ENCODE measurements at regions of chr9 and their contacts with region 1.

Region 1: GRCh38 chr9:73081979-73082657 is 69.5 kb upstream of the ANXA1 start:
- DNase-seq: no peak
- H3K4me3 ChIP-seq: no peak overlapping the region
- H3K27ac ChIP-seq: no peak overlapping the region
- H3K4me1 ChIP-seq: peaks cover 0 to 44% (median 37%) of the 10 kb centered on the region in 4 donors
- H3K27me3 ChIP-seq: no peaks in the 10 kb centered on the region
- CTCF ChIP-seq: peak; percentile 84 to 87 (median 85)
- EP300 ChIP-seq: no peak
- POLR2A ChIP-seq: no peak

Region 2: DNA sequence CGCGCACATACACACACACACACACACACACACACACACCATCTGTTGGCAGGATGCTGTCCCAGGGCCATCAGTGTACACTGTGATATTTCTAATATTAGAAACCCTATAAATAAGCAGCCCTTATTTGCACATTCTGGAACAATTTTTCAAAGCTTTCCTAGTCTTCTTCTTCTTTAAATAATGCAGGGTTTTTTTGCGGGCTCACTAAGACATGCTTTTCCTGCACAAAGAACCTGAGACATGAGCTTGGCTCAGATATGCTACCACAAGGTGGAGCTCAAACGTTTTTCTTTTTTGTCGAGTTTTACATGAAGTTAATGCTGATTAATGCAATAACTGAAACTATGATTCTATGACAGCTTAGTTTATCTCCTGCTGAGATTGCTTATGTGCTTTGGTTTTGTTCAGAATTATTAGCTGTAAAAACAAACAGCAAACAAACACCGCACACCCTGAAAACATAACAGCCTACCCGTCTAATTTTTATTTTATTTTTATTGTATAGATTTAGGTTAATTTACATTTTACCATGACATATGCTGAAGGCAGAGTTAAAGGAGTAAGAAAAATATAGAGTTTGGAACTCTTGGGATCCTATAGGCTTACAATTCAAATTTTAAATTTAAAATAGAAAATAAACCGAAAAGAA is 225.0 kb before region 1 on chr9:
- intact Hi-C with region 1: loop called (anchors 2 kb)
- DNase-seq: no peak
- H3K4me3 ChIP-seq: no peak overlapping the region
- H3K27ac ChIP-seq: peak overlapping the region in 1 of 4 donors; percentile 18
- H3K4me1 ChIP-seq: peaks cover 16 to 22% (median 19%) of the 10 kb centered on the region in 4 donors
- H3K27me3 ChIP-seq: no peaks in the 10 kb centered on the region
- CTCF ChIP-seq: peak; percentile 69 to 80 (median 69)
- EP300 ChIP-seq: no peak
- POLR2A ChIP-seq: no peak

Region 3: DNA sequence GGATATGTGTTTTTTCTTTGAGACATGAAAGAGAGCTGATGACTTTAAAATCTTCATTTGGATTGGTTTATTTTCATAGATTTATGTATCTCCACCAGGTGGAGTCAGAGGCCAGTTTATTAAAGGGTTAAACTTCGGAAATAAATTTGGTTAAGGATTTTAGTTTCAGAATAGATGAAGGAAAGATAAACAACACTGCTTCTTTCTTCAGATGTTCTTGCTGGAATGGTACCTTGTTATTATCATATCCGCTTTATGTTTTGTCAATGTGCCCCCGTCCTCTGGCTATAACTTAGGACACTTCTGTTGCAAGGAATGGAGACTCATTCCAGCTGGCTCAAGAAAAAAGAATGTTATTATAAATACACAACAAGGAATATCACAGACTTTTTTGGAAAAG is 210.4 kb before region 1 on chr9:
- intact Hi-C with region 1: loop called (anchors 5 kb)
- DNase-seq: no peak
- H3K4me3 ChIP-seq: peak overlapping the region in 3 of 4 donors; percentile 11 to 36 (median 18)
- H3K27ac ChIP-seq: peak overlapping the region in 3 of 4 donors; percentile 11 to 29 (median 19)
- H3K4me1 ChIP-seq: peaks cover 15 to 31% (median 28%) of the 10 kb centered on the region in 4 donors
- H3K27me3 ChIP-seq: no peaks in the 10 kb centered on the region
- CTCF ChIP-seq: peak; percentile 41 to 47 (median 45)
- EP300 ChIP-seq: no peak
- POLR2A ChIP-seq: no peak

Region 4: DNA sequence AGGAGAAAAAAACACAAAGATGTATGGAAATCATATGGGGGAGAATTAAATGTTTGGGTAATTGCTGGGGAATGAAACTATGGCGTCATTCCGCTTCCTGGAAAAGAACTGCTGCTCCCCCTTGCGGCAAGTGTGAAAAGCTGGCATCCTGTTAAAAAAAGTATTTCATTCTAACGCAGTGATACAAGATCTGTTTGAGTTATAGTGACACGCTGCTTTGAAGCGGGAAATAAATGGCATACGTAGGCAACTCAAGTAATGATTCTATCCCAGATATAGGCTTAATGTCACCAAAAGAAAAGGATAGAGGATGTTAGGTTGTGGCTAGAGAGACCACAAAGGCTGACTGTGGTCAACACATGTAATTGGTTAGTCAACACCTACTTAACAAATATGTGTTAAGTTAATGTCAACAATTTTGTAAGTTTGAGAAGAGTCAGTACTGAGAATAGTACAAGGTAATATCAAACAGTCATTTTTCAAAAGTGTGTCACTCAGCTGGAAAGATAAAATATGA is 59.0 kb before region 1 on chr9:
- intact Hi-C with region 1: loop called (anchors 5 kb)
- DNase-seq: no peak
- H3K4me3 ChIP-seq: peak overlapping the region in 1 of 4 donors; percentile 14
- H3K27ac ChIP-seq: peak overlapping the region; percentile 54 to 76 (median 75)
- H3K4me1 ChIP-seq: peaks cover 0 to 25% (median 20%) of the 10 kb centered on the region in 4 donors
- H3K27me3 ChIP-seq: no peaks in the 10 kb centered on the region
- CTCF ChIP-seq: peak; percentile 79 to 88 (median 80)
- EP300 ChIP-seq: no peak
- POLR2A ChIP-seq: no peak

Region 5: DNA sequence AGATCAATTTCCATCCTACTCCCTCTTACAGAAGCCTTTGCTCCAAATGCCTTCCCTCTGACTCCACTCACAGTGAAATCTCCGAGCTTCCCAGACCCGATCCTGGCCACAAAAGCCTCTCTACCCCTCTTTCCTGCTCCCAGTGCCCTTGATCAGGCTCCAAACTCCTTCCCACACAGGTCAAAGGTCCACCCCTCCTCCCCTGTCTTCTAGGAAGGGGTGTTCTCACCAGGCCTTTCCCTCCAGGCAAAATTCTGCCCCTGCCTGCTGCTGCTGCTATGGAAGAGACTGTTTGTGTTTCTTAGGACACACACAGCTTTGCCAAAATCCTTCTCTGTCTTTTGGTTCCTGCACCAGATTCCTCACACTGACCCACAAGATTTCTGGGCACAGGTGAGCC is 43.5 kb before region 1 on chr9:
- intact Hi-C with region 1: loop called (anchors 5 kb)
- DNase-seq: peak; percentile 94
- H3K4me3 ChIP-seq: peak overlapping the region; percentile 20 to 46 (median 34)
- H3K27ac ChIP-seq: peak overlapping the region; percentile 87 to 91 (median 88)
- H3K4me1 ChIP-seq: peaks cover 5 to 45% (median 33%) of the 10 kb centered on the region in 4 donors
- H3K27me3 ChIP-seq: no peaks in the 10 kb centered on the region
- CTCF ChIP-seq: no peak
- EP300 ChIP-seq: no peak
- POLR2A ChIP-seq: no peak

Region 6: DNA sequence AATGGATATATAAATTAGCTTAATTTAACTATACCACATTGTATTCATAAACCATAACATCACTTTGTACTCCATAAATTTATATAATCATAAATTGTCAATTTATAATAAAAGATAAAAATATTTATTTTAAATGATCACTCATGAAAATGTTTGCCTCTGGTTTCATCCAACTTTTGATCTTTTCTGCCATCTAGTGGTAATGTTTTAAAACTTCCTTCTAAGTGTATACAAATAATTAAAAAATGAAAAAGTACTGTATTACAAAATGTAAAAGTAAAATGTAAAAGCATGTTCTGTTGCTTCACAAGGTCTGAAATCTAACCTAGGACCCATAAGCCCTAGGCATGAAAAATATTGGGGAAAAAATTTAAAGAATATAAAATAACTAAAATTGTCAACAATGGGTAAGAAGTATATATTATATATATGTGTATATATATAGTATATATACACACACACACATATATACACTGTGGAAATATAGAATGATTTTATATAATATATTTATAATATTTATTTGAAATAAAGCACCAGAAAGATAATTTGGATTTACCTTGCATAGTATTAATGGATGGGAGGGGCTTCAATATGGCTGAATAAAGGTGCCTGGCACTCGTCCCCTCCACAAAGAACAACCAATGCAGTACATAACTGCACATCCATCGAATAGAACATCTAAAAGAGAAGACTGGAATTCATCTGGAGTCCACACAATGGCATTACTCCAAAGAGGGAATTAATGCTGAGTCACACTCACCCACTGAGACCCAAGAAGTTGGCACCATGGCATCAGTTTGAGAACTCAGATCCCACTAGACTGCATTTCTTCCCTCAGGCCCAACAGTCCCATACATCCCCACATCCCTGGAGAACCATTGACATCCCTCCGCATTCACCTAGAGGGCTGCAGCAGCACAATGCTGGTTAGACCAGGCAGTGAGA is 102.1 kb after region 1 on chr9:
- intact Hi-C with region 1: no loop called
- DNase-seq: no peak
- H3K4me3 ChIP-seq: no peak overlapping the region
- H3K27ac ChIP-seq: no peak overlapping the region
- H3K4me1 ChIP-seq: peaks cover 0 to 17% (median 10%) of the 10 kb centered on the region in 4 donors
- H3K27me3 ChIP-seq: no peaks in the 10 kb centered on the region
- CTCF ChIP-seq: peak; percentile 52 to 67 (median 56)
- EP300 ChIP-seq: no peak
- POLR2A ChIP-seq: no peak

Region 7: DNA sequence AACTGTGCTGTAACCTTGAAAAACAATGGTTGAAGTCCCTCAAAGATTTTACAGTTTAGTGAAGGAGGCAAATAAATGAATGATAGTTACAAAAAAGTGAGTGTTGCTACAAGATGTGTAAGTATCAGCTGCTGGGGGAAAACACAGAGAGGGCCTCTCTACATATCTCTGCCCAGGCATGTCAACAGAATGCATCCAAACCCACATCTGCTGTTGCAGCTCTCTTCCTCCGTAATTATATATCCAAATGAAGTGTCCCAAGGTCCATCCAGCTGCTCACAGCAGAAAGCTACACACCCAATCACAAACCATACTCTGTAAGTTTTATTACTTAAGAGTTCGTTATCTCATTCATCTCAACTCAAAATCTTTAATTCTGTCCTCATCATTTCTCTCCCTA is 654.2 kb after region 1 on chr9:
- intact Hi-C with region 1: no loop called
- DNase-seq: no peak
- H3K4me3 ChIP-seq: no peak overlapping the region
- H3K27ac ChIP-seq: no peak overlapping the region
- H3K4me1 ChIP-seq: no peaks in the 10 kb centered on the region
- H3K27me3 ChIP-seq: no peaks in the 10 kb centered on the region
- CTCF ChIP-seq: no peak
- EP300 ChIP-seq: no peak
- POLR2A ChIP-seq: no peak

Region 8: GRCh38 chr9:73845539-73845938 is 763.4 kb after region 1 on chr9:
- intact Hi-C with region 1: no loop called
- DNase-seq: no peak
- H3K4me3 ChIP-seq: no peak overlapping the region
- H3K27ac ChIP-seq: no peak overlapping the region
- H3K4me1 ChIP-seq: no peaks in the 10 kb centered on the region
- H3K27me3 ChIP-seq: no peaks in the 10 kb centered on the region
- CTCF ChIP-seq: no peak
- EP300 ChIP-seq: no peak
- POLR2A ChIP-seq: no peak